Dendritic cell treated with granulocyte-macrophage colony-stimulating factor and Interleukin-4, amounts not matched to agents 40 ng/mL and 50 ng/mL, for 4 days (primary cell): ENCODE measurements at regions of chr1 and their contacts with region 1.

Region 1: GRCh38 chr1:221601166-221601565 is 140.7 kb downstream of the DUSP10 start:
- H3K4me3 Mint-ChIP-seq: no peak overlapping the region
- H3K27ac Mint-ChIP-seq: no peak overlapping the region
- H3K4me1 Mint-ChIP-seq: no peaks in the 10 kb centered on the region
- H3K27me3 Mint-ChIP-seq: no peaks in the 10 kb centered on the region

Region 2: DNA sequence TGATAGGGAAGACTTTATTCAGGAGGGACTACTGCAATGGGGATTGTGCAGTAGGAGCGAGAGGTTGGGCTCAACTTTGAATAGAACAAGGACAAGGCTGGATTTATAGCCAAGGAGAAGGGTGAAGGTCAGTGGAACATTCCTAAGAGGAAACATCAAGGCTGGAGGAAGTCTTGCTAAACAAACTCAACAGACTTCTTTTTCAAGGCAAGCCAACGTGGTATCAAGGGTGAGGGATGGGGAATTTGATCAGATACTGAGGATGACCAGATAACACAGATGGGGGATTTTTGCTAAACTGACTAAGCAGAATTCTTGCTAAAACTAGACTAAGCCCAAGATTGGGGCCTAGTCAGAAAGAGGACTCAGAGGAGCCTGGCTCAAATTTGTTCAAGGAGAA is 33.4 kb after region 1 on chr1:
- intact Hi-C with region 1: loop called (anchors 2 kb)
- H3K4me3 Mint-ChIP-seq: no peak overlapping the region
- H3K27ac Mint-ChIP-seq: no peak overlapping the region
- H3K4me1 Mint-ChIP-seq: no peaks in the 10 kb centered on the region
- H3K27me3 Mint-ChIP-seq: no peaks in the 10 kb centered on the region